Activated B cell treated with CpG ODN at 0.5 μM for 24 hours (primary cell): ENCODE measurements at regions of chr14 and their contacts with region 1.

Region 1: GRCh38 chr14:88023658-88024187 is 18.8 kb downstream of the GPR65 start:
- DNase-seq: no peak
- ATAC-seq: no peak
- H3K4me3 Mint-ChIP-seq: no peak overlapping the region
- H3K27ac Mint-ChIP-seq: no peak overlapping the region
- H3K4me1 Mint-ChIP-seq: peaks cover 31% of the 10 kb centered on the region
- H3K27me3 Mint-ChIP-seq: no peaks in the 10 kb centered on the region
- CTCF ChIP-seq: no peak

Region 2: GRCh38 chr14:87979689-87980088 is 44.0 kb before region 1 on chr14:
- CTCF ChIA-PET with region 1: no interaction called
- POLR2A ChIA-PET with region 1: no interaction called
- intact Hi-C with region 1: loop called (anchors 5 kb)
- DNase-seq: no peak
- ATAC-seq: no peak
- H3K4me3 Mint-ChIP-seq: no peak overlapping the region
- H3K27ac Mint-ChIP-seq: no peak overlapping the region
- H3K4me1 Mint-ChIP-seq: no peaks in the 10 kb centered on the region
- H3K27me3 Mint-ChIP-seq: no peaks in the 10 kb centered on the region
- CTCF ChIP-seq: no peak

Region 3: DNA sequence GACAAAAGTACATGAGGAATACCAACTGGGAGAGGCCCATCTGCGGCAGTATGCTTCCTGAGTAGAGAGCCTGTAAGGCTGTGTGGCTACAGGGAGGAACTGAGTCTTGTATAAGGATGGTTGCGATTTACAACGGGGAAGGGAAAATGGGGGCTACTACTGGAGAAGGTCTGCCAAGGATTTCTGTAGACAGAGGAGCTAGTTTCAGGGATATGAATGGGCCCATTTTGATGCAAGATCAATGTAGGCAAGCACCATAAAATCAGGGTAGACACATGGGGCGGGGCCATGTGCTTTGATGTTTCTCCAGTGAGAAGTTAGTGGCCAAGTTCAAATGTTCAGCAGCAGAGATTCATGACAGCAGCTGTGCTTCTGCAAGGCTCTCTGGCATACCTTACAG is 130.6 kb after region 1 on chr14:
- CTCF ChIA-PET with region 1: no interaction called
- POLR2A ChIA-PET with region 1: no interaction called
- intact Hi-C with region 1: no loop called
- DNase-seq: no peak
- ATAC-seq: no peak
- H3K4me3 Mint-ChIP-seq: no peak overlapping the region
- H3K27ac Mint-ChIP-seq: no peak overlapping the region
- H3K4me1 Mint-ChIP-seq: no peaks in the 10 kb centered on the region
- H3K27me3 Mint-ChIP-seq: peaks cover 14% of the 10 kb centered on the region
- CTCF ChIP-seq: no peak